ENCODE measurements at regions of chr2 and their contacts with region 1.

Region 1: GRCh38 chr2:169573160-169573973 is at the start of gene FASTKD1:
- DNase-seq: peak; percentile 89
- H3K4me3 ChIP-seq: peak within 1 kb of the TSS; percentile 76 to 95 (median 76)
- H3K27ac ChIP-seq: peak within 1 kb of the TSS; percentile 52
- H3K4me1 ChIP-seq: peaks cover 2% of the 10 kb centered on the region
- H3K27me3 ChIP-seq: no peaks in the 10 kb centered on the region
- CTCF ChIP-seq: no peak
- POLR2A ChIP-seq: peak; percentile 71
- total RNA-seq, gene FASTKD1: 32.2 and 33.4 TPM in 2 replicates

Region 2: GRCh38 chr2:169479257-169480078 is 93.9 kb before region 1 on chr2 and contains the start of gene BBS5:
- CTCF ChIA-PET with region 1: interaction called, 3 read pairs
- POLR2A ChIA-PET with region 1: no interaction called
- dilution Hi-C with region 1: no loop called
- intact Hi-C with region 1: loop called (anchors 5 kb)
- DNase-seq: peak; percentile 87
- H3K4me3 ChIP-seq: peak within 1 kb of the TSS; percentile 47 to 82 (median 70)
- H3K27ac ChIP-seq: peak within 1 kb of the TSS; percentile 66
- H3K4me1 ChIP-seq: peaks cover 17% of the 10 kb centered on the region
- H3K27me3 ChIP-seq: no peaks in the 10 kb centered on the region
- CTCF ChIP-seq: peak; percentile 55 to 64
- POLR2A ChIP-seq: peak; percentile 31
- total RNA-seq, gene BBS5: 4.1 and 5.6 TPM in 2 replicates

Region 3: DNA sequence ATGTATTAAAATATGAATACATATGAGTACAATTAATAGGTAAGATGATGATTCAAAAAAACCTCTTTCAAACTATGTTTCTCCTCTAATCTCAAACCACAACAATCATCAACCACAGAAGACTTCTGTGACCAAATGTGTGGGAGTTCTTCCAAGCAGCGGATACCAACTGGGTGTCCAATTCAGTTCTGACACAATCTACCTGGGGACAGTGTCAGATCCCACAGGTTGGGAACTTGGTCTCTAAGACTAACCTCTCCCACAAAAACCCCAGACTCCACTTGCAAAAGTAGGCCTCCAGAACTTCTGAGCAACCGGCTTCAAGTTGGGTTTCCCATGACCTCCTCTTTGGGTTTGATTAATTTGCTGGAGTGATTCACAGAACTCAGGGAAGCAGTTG is 26.6 kb before region 1 on chr2:
- CTCF ChIA-PET with region 1: no interaction called
- POLR2A ChIA-PET with region 1: interaction called, 12 read pairs
- dilution Hi-C with region 1: no loop called
- intact Hi-C with region 1: no loop called
- DNase-seq: no peak
- H3K4me3 ChIP-seq: no peak overlapping the region
- H3K27ac ChIP-seq: no peak overlapping the region
- H3K4me1 ChIP-seq: no peaks in the 10 kb centered on the region
- H3K27me3 ChIP-seq: no peaks in the 10 kb centered on the region
- CTCF ChIP-seq: no peak
- POLR2A ChIP-seq: no peak

Region 4: DNA sequence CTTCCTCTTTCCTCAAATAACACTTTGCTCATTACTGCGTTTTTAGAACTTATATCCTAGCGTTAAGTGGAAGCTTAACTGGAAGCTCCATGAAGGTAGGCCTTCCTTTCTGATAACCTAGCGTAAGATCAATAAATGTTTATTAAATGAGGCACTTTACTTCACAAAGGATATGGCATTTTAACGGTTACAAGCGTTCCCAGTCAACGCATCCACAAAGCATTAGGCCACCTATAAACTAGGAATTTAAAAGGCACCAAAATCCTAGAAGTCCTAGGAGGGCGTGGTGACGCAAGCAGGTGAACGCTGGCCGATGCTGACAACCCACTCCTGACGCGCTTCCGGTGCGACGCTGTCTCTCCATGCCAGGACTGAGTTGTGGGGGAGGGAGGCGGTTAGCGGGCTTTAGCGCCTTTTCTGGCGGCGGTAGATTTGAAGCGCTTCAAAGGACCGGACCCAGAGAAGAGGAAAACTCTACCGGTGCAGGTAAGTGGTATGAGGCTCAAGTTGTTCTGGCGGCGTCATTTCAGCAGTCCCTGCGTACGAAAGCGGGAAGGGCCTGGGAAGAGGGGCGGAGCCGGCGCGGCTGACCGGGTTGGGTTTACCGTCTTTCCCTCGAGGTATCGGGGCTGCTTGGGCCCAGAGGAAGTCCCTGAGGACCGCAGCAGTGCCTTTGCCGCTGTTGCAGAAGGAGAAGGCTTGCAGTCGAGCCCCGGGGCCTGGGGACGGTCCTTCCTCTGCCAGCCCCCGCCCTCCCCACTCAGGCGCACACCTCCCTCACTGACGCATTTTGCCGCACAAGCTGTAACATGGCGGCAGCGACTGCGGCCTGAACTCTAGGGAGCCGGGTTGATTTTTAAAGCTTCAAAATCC is 10.9 kb after region 1 on chr2 and contains the start of gene PPIG:
- CTCF ChIA-PET with region 1: interaction called, 6 read pairs
- POLR2A ChIA-PET with region 1: interaction called, 8 read pairs
- dilution Hi-C with region 1: no loop called
- intact Hi-C with region 1: loop called (anchors 1 kb)
- DNase-seq: peak; percentile 87
- H3K4me3 ChIP-seq: peak within 1 kb of the TSS; percentile 55 to 99 (median 98)
- H3K27ac ChIP-seq: peak within 1 kb of the TSS; percentile 89
- H3K4me1 ChIP-seq: peaks cover 9% of the 10 kb centered on the region
- H3K27me3 ChIP-seq: no peaks in the 10 kb centered on the region
- CTCF ChIP-seq: no peak
- POLR2A ChIP-seq: peak; percentile 56
- total RNA-seq, gene PPIG: 36.7 and 44.9 TPM in 2 replicates

Region 5: GRCh38 chr2:169694113-169694903 is 120.9 kb after region 1 on chr2 and contains the starts of genes CFAP210 and PHOSPHO2:
- CTCF ChIA-PET with region 1: no interaction called
- POLR2A ChIA-PET with region 1: no interaction called
- dilution Hi-C with region 1: no loop called
- intact Hi-C with region 1: loop called (anchors 5 kb)
- DNase-seq: peak; percentile 96
- H3K4me3 ChIP-seq: peak within 1 kb of the TSS; percentile 21 to 87 (median 85)
- H3K27ac ChIP-seq: peak within 1 kb of the TSS; percentile 64
- H3K4me1 ChIP-seq: peaks cover 8% of the 10 kb centered on the region
- H3K27me3 ChIP-seq: peaks cover 11 to 25% of the 10 kb centered on the region in 2 experiments
- CTCF ChIP-seq: no peak
- POLR2A ChIP-seq: peak; percentile 80
- total RNA-seq, gene CFAP210: not detected in 2 replicates
- total RNA-seq, gene PHOSPHO2: 2.7 TPM in 2 replicates

Measured in endothelial cell of umbilical vein (primary cell).